CD8-positive, alpha-beta memory T cell (primary cell): ENCODE measurements at regions of chr6 and their contacts with region 1.

Region 1: GRCh38 chr6:44312901-44313788 is at the start of gene AARS2:
- DNase-seq: peak; percentile 83 to 92 (median 87)
- H3K4me3 ChIP-seq: peak within 1 kb of the TSS; percentile 85
- H3K4me3 Mint-ChIP-seq: peak within 1 kb of the TSS; percentile 94 to 98 (median 96)
- H3K27ac ChIP-seq: peak within 1 kb of the TSS; percentile 86
- H3K27ac Mint-ChIP-seq: peak within 1 kb of the TSS; percentile 69 to 97 (median 96)
- H3K4me1 ChIP-seq: peaks cover 11% of the 10 kb centered on the region
- H3K4me1 Mint-ChIP-seq: peaks cover 16 to 23% (median 21%) of the 10 kb centered on the region in 3 donors
- H3K27me3 ChIP-seq: no peaks in the 10 kb centered on the region
- H3K27me3 Mint-ChIP-seq: peaks cover 4 to 6% of the 10 kb centered on the region in 2 donors
- total RNA-seq, gene AARS2: 25.8 to 27.7 TPM

Region 2: DNA sequence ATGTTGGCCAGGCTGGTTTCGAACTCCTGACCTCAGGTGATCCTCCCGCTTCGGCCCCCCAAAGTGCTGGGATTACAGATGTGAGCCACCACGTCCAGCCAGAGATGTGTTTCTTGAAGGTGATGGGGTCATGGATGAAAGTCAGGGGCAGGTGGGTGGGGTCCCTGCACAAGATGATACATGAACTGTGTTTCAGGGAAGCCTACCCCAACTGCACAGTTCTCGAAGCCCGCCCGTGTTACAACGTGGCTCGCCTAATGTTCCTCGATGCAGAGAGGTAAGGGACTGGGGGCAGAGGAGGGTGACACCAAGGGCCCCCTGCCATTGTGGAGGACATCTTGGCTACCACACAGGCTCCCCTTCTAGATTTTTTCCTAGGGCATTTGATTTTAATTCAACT is 166.5 kb before region 1 on chr6:
- CTCF ChIA-PET with region 1: no interaction called
- POLR2A ChIA-PET with region 1: no interaction called
- DNase-seq: no peak
- H3K4me3 ChIP-seq: no peak overlapping the region
- H3K4me3 Mint-ChIP-seq: no peak overlapping the region
- H3K27ac ChIP-seq: no peak overlapping the region
- H3K27ac Mint-ChIP-seq: peak overlapping the region in 1 of 8 donors; percentile 57
- H3K4me1 ChIP-seq: peaks cover 2% of the 10 kb centered on the region
- H3K4me1 Mint-ChIP-seq: peaks cover 6 to 7% (median 6%) of the 10 kb centered on the region in 3 donors
- H3K27me3 ChIP-seq: no peaks in the 10 kb centered on the region
- H3K27me3 Mint-ChIP-seq: no peaks in the 10 kb centered on the region

Region 3: GRCh38 chr6:44297063-44298038 is 15.8 kb before region 1 on chr6:
- CTCF ChIA-PET with region 1: interaction called, 13 read pairs
- POLR2A ChIA-PET with region 1: no interaction called
- DNase-seq: peak in 2 of 5 donors; percentile 29 to 43
- H3K4me3 ChIP-seq: peak overlapping the region; percentile 47
- H3K4me3 Mint-ChIP-seq: peak overlapping the region in 6 of 7 donors; percentile 41 to 69 (median 59)
- H3K27ac ChIP-seq: no peak overlapping the region
- H3K27ac Mint-ChIP-seq: no peak overlapping the region
- H3K4me1 ChIP-seq: peaks cover 7% of the 10 kb centered on the region
- H3K4me1 Mint-ChIP-seq: peaks cover 0 to 19% (median 8%) of the 10 kb centered on the region in 3 donors
- H3K27me3 ChIP-seq: peaks cover 37% of the 10 kb centered on the region
- H3K27me3 Mint-ChIP-seq: peaks cover 40 to 45% of the 10 kb centered on the region in 2 donors

Region 4: DNA sequence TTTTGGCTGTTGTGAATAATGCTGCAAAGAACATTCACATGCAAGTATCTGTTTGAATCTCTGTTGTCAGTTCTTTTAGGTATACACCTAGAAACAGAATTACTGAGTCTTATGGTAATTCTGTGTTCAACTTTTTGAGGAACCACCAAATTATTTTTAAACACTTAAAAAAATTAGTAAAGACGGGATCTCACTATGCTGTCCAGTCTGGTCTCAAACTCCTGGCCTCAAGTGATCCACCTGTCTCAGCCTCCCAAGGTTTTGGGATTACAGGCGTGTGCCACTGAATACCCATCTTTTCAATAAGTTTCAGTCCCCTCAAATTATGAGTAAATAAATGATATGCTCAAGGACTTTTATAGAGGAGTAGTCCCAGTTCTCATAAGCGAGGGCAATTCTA is 46.8 kb after region 1 on chr6:
- CTCF ChIA-PET with region 1: no interaction called
- POLR2A ChIA-PET with region 1: no interaction called
- DNase-seq: no peak
- H3K4me3 ChIP-seq: no peak overlapping the region
- H3K4me3 Mint-ChIP-seq: no peak overlapping the region
- H3K27ac ChIP-seq: no peak overlapping the region
- H3K27ac Mint-ChIP-seq: no peak overlapping the region
- H3K4me1 ChIP-seq: no peaks in the 10 kb centered on the region
- H3K4me1 Mint-ChIP-seq: no peaks in the 10 kb centered on the region
- H3K27me3 ChIP-seq: no peaks in the 10 kb centered on the region
- H3K27me3 Mint-ChIP-seq: peaks cover 12 to 30% of the 10 kb centered on the region in 2 donors